Heart right ventricle (tissue), 16 donors: ENCODE measurements at regions of chr22 and their contacts with region 1.

Region 1: DNA sequence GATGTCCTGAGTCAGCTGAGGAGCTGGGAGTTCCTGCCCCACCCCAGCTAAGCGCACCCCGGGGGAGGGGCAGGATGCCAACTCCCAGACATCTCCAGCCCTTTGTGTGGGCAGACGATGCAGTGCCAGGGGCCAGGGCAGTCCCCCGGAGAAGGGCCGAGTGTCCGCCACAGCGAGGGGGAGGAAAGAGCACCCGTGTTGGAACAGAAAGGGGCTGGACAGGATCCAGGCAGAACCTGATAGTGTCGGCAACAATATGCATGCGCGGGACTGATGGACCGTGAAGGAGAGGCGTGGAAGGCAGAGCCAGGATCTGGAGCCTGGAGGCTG is 1434.7 kb downstream of the BRD1 start:
- DNase-seq: no peak
- ATAC-seq: no peak
- H3K4me3 ChIP-seq: no peak overlapping the region
- H3K27ac ChIP-seq: no peak overlapping the region
- H3K4me1 ChIP-seq: no peaks in the 10 kb centered on the region
- H3K27me3 ChIP-seq: peaks cover 0 to 31% (median 16%) of the 10 kb centered on the region in 7 donors
- CTCF ChIP-seq: no peak

Region 2: DNA sequence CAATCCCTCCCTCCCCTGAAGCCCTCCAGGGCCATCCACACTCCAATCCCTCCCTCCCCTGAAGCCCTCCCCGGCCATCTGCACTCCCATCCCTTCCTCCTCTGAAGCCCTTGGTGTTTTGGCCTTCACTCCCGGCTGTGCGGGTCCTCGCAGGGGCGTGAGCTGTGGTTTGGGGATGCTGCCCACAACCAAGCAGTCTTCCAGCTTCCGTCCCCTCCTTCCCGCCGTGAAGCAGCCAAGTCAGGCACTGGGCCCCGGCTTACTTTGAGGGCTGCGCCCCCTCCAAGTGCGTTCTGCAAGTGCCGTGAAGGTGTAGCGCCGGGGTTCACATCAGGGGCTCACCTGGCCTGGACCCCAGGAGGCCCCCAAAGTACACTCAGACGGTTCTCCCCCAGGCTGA is 1098.7 kb after region 1 on chr22:
- intact Hi-C with region 1: loop called in 1 of 10 experiments (anchors 5 kb)
- DNase-seq: no peak
- ATAC-seq: no peak
- H3K4me3 ChIP-seq: no peak overlapping the region
- H3K27ac ChIP-seq: no peak overlapping the region
- H3K4me1 ChIP-seq: no peaks in the 10 kb centered on the region
- H3K27me3 ChIP-seq: peaks cover 0 to 11% (median 0%) of the 10 kb centered on the region in 7 donors
- CTCF ChIP-seq: no peak